ENCODE measurements at regions of chr5 and their contacts with region 1.

Region 1: DNA sequence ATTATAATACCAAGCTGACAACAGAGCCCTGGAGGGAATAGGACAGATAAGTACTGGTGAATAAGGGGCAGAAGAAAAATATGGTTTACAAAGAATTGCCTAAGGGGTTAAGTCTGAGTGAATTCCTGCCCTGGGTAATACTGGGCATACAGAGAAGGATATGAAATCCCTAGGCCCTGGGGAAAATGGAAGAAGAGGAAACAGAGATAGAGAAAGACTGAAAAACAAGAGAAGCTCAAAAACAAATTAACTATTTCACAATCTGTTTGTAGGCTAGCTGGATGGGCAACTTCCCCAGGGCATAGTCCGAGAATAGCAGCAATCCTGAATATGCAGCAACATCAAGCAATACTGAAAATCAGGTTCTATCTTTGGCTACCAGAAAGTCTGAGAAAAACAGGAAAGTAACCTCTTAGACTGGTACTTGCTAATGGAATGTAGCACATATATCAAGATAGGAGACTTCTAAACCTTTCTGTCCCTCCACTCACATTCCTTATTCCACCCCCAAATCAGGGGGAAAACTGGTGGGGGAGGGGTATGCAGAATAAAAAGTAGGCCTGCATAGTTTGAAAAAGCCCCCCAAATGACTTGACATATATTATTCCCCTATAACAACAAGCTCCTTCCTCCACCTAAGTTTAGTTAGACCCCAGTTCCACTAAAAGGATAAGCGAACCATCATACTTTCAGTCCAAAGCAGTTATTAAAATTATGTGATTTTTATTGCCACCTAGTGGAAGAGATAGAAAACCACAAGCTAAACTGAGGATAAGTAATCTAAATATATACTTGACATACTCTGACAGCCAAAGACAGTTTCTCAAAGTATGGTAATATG is 20.6 kb downstream of the SLC38A9 start:
- DNase-seq: no peak
- H3K4me3 ChIP-seq: peak overlapping the region in 24 of 59 donors; percentile 0 to 47 (median 22)
- H3K27ac ChIP-seq: peak overlapping the region in 14 of 59 donors; percentile 7 to 55 (median 32)
- H3K27me3 ChIP-seq: no peaks in the 10 kb centered on the region
- CTCF ChIP-seq: peak; percentile 67 to 92 (median 82)

Region 2: DNA sequence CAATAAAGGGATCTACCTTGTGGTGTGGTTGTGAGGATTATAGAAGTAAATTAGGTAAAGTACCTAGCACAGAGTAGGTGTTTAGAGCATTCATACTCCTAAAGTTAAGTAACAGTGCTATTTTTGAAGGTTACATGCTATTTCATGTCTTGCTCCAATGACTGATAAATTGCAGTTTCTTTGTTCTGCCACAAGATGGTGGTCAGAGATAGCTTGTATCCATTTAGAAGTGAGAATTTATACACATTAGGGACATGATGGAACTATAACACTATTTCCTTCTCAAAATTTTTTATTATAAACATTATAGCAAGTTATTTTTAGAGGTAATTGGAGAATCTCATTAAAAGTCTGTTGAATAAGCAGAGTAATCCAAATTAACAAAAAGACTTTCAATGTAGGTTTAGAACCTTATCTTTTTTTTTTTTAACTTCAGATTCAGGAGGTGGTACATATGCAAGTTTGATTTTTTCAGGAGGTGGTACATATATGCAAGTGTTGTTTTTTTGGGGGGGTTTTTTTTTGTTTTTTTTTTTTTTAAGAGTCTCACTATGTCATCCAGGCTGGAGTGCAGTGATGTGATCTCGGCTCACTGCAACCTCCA is 366.6 kb before region 1 on chr5:
- intact Hi-C with region 1: loop called in 1 of 2 experiments (anchors 5 kb)
- DNase-seq: no peak
- H3K4me3 ChIP-seq: no peak overlapping the region
- H3K27ac ChIP-seq: peak overlapping the region in 1 of 59 donors; percentile 12
- H3K27me3 ChIP-seq: no peaks in the 10 kb centered on the region
- CTCF ChIP-seq: peak; percentile 45 to 84 (median 72)

Region 3: GRCh38 chr5:55344392-55344992 is 347.0 kb before region 1 on chr5:
- intact Hi-C with region 1: loop called (anchors 5 kb)
- DNase-seq: peak in 9 of 10 donors; percentile 47 to 90 (median 56)
- H3K4me3 ChIP-seq: peak overlapping the region in 1 of 59 donors; percentile 3
- H3K27ac ChIP-seq: peak overlapping the region in 33 of 59 donors; percentile 2 to 75 (median 36)
- H3K27me3 ChIP-seq: no peaks in the 10 kb centered on the region
- CTCF ChIP-seq: peak; percentile 79 to 98 (median 91)

Region 4: GRCh38 chr5:55534436-55535198 is 156.9 kb before region 1 on chr5 and contains the start of gene PLPP1:
- intact Hi-C with region 1: loop called (anchors 5 kb)
- DNase-seq: peak; percentile 91 to 98 (median 94)
- H3K4me3 ChIP-seq: peak within 1 kb of the TSS; percentile 60 to 98 (median 88)
- H3K27ac ChIP-seq: peak within 1 kb of the TSS; percentile 89 to 100 (median 99)
- H3K27me3 ChIP-seq: no peaks in the 10 kb centered on the region
- CTCF ChIP-seq: peak in 29 of 56 donors; percentile 2 to 52 (median 20)
- total RNA-seq, gene PLPP1: 42.8 to 88.1 (median 59.2) TPM

Measured in dorsolateral prefrontal cortex (tissue), 120 donors.